ENCODE measurements at regions of chr13 and their contacts with region 1.

Region 1: GRCh38 chr13:36746051-36746450 is 72.2 kb downstream of the SERTM1 start:
- DNase-seq: no peak
- H3K4me3 ChIP-seq: no peak overlapping the region
- CTCF ChIP-seq: no peak

Region 2: GRCh38 chr13:36420437-36420891 is 325.6 kb before region 1 on chr13:
- CTCF ChIA-PET with region 1: interaction called, 15 read pairs
- POLR2A ChIA-PET with region 1: no interaction called
- DNase-seq: no peak
- H3K4me3 ChIP-seq: no peak overlapping the region
- CTCF ChIP-seq: peak; percentile 76

Region 3: GRCh38 chr13:36778083-36778671 is 32.1 kb after region 1 on chr13:
- CTCF ChIA-PET with region 1: no interaction called
- POLR2A ChIA-PET with region 1: no interaction called
- DNase-seq: peak; percentile 29
- H3K4me3 ChIP-seq: peak overlapping the region; percentile 35
- CTCF ChIP-seq: no peak